MCF 10A (cell line): ENCODE measurements at regions of chr6 and their contacts with region 1.

Region 1: GRCh38 chr6:118509009-118509617 is 39.0 kb upstream of the PLN start:
- DNase-seq: peak; percentile 43
- H3K4me3 Mint-ChIP-seq: no peak overlapping the region
- H3K27ac Mint-ChIP-seq: no peak overlapping the region
- H3K4me1 Mint-ChIP-seq: no peaks in the 10 kb centered on the region
- H3K27me3 Mint-ChIP-seq: no peaks in the 10 kb centered on the region
- CTCF ChIP-seq: peak; percentile 63

Region 2: DNA sequence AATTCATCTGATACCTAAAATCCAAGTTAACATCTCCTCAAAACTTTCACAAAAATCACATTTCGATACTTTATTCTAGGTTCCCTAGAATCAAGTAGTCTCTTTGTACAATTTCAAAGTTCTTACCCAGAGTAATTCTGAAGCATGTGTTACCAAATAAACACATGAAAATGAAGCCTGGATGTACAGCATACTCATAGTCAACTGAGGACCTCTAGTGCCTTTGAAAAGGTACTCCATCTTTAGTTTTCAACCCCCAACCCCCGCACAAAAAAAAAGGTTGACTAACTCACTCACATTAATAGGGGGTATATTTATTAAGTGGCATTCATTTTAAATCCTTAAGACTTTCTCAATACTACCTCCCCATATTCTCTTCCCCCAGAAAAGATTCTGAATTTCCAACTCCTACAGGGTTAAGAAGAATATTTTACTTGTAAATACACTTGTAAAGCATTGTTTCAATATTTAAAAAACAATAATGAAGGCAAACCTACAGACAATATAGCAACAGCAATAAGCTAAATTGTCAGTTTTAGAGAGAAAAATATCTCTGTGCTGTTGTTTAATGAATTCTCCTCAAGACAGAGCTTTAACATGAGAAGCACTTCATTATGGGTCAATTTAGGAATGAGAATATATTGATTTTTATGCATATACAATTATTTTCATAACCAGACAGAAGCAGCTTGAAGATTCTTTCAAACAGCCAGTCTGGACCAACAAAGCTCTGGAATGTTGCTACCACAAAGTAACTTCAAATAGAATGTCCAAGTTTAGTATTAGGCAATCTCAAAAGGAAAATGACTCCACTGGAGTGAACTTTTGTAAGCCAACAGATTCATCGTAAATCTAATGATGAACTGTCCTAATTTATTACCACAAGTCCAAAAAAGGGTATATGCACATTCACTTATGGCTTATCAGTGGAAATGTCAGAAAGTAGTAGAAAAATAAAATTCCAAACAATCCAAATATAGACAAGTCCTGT is 42.2 kb after region 1 on chr6:
- CTCF ChIA-PET with region 1: interaction called, 5 read pairs
- POLR2A ChIA-PET with region 1: no interaction called
- intact Hi-C with region 1: loop called (anchors 1 kb)
- DNase-seq: peak; percentile 56
- H3K4me3 Mint-ChIP-seq: no peak overlapping the region
- H3K27ac Mint-ChIP-seq: no peak overlapping the region
- H3K4me1 Mint-ChIP-seq: peaks cover 12% of the 10 kb centered on the region
- H3K27me3 Mint-ChIP-seq: no peaks in the 10 kb centered on the region
- CTCF ChIP-seq: peak; percentile 59

Region 3: DNA sequence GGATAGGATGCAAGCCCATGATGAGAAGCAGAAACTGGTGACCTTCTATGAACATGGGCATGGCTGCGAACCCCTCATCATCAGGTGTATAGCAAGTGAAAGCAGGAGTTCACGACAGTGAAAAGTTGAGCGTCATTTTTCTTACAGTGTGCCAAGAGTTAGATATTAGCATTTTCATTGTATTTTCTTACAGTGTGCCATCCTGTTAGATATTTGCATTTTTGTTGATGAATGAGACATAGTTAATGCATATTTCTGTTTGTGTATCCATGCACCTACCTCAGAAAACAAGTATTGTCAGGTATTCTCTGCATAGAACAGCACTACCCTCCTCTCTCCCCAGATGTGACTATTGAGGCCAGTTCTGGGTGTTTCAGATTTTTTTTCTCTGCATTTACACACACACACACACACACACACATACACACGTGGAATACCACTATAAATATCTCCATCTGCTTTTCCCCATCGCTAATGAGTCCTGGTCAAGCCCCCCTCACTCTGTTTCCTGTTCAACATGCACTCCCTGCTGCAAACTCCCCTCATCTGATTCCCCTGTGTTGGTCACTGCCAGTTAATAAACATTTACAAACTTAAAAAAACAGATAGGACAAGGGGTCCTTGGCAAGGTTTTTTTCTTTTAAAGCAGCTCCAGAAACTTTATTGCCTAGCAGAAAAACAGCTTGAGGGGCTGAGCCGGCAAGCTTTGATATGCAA is 80.7 kb after region 1 on chr6:
- CTCF ChIA-PET with region 1: no interaction called
- POLR2A ChIA-PET with region 1: no interaction called
- intact Hi-C with region 1: no loop called
- DNase-seq: no peak
- H3K4me3 Mint-ChIP-seq: no peak overlapping the region
- H3K27ac Mint-ChIP-seq: no peak overlapping the region
- H3K4me1 Mint-ChIP-seq: no peaks in the 10 kb centered on the region
- H3K27me3 Mint-ChIP-seq: no peaks in the 10 kb centered on the region
- CTCF ChIP-seq: no peak

Region 4: GRCh38 chr6:118618679-118619377 is 109.7 kb after region 1 on chr6:
- CTCF ChIA-PET with region 1: no interaction called
- POLR2A ChIA-PET with region 1: no interaction called
- intact Hi-C with region 1: loop called (anchors 2 kb)
- DNase-seq: peak; percentile 67
- H3K4me3 Mint-ChIP-seq: no peak overlapping the region
- H3K27ac Mint-ChIP-seq: no peak overlapping the region
- H3K4me1 Mint-ChIP-seq: peaks cover 7% of the 10 kb centered on the region
- H3K27me3 Mint-ChIP-seq: no peaks in the 10 kb centered on the region
- CTCF ChIP-seq: peak; percentile 89

Region 5: DNA sequence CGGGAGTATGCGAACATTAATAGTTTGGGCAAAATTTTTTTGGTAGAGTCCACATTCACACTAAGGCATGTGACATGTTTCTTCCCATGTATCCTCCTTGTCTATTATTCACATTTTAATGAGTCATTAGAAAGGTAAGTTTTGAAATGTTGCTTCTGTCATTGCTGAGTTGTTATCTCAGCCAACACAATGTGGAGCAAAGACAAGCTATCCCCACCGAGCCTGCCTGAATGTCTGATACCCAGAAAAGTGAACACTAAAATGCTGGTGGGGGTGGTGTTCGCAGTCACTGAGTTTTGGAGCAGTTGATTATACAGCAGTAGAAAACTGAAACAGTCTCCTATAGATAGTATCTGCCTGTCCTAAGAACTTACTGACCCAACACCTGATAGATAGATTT is 316.5 kb after region 1 on chr6:
- CTCF ChIA-PET with region 1: no interaction called
- POLR2A ChIA-PET with region 1: no interaction called
- intact Hi-C with region 1: no loop called
- DNase-seq: no peak
- H3K4me3 Mint-ChIP-seq: no peak overlapping the region
- H3K27ac Mint-ChIP-seq: no peak overlapping the region
- H3K4me1 Mint-ChIP-seq: no peaks in the 10 kb centered on the region
- H3K27me3 Mint-ChIP-seq: no peaks in the 10 kb centered on the region
- CTCF ChIP-seq: no peak